HEK293 (cell line): ENCODE measurements at regions of chr5 and their contacts with region 1.

Region 1: GRCh38 chr5:171913987-171914273 is 92.5 kb downstream of the FBXW11 start:
- H3K4me3 ChIP-seq: no peak overlapping the region
- H3K27ac ChIP-seq: no peak overlapping the region
- H3K4me1 ChIP-seq: no peaks in the 10 kb centered on the region
- CTCF ChIP-seq: no peak

Region 2: GRCh38 chr5:171418316-171418981 is 495.5 kb before region 1 on chr5:
- CTCF ChIA-PET with region 1: interaction called, 37 read pairs
- POLR2A ChIA-PET with region 1: interaction called, 3 read pairs
- H3K4me3 ChIP-seq: peak overlapping the region; percentile 49
- H3K27ac ChIP-seq: no peak overlapping the region
- H3K4me1 ChIP-seq: peaks cover 2% of the 10 kb centered on the region; the same call in 1 of the 2 replicates
- CTCF ChIP-seq: peak; percentile 96

Region 3: DNA sequence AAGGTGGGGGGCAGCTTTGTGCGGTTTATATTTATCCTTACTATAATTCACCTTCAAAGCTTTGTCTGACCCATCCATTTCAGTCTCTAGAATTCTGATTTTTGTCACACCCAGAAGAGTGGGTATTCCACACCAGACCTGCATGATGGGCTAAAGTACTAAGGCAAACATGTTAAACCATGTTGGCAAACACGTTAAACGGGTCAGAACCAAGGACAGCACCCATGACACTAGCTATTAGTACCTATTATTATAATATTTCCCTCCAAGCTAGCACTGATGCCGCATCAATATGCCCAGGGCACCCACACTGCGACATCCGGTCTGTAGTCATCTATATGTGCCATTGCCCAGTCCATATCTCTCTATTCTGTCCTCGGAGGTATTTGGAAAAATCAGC is 12.2 kb before region 1 on chr5:
- CTCF ChIA-PET with region 1: interaction called, 19 read pairs
- POLR2A ChIA-PET with region 1: no interaction called
- H3K4me3 ChIP-seq: no peak overlapping the region
- H3K27ac ChIP-seq: no peak overlapping the region
- H3K4me1 ChIP-seq: no peaks in the 10 kb centered on the region
- CTCF ChIP-seq: no peak

Region 4: DNA sequence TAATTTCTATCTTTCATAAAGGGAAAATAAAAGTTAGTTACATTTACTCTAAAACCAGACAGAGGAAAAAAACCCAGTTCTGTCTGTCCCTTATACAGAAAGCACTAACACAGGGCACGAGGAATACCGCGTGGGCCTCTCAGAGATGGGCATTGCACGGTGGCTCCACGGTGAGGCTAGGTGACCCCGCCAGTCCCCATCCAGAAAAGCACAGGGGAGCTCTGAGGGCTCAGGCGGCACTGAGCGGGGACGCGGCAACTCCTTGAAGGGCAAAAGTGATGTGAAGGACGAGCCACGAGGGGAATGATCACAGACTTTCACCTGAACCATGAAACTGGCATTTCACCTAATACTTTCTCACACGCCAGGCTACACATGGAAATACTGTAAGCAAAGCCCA is 128.3 kb after region 1 on chr5:
- CTCF ChIA-PET with region 1: interaction called, 44 read pairs
- POLR2A ChIA-PET with region 1: interaction called, 3 read pairs
- H3K4me3 ChIP-seq: no peak overlapping the region
- H3K27ac ChIP-seq: no peak overlapping the region
- H3K4me1 ChIP-seq: no peaks in the 10 kb centered on the region; the same call in 1 of the 2 replicates
- CTCF ChIP-seq: no peak

Region 5: GRCh38 chr5:172188033-172188892 is 274.3 kb after region 1 on chr5 and contains the start of gene STK10:
- CTCF ChIA-PET with region 1: interaction called, 22 read pairs
- POLR2A ChIA-PET with region 1: interaction called, 3 read pairs
- H3K4me3 ChIP-seq: peak within 1 kb of the TSS; percentile 48
- H3K27ac ChIP-seq: peak within 1 kb of the TSS; percentile 59
- H3K4me1 ChIP-seq: peaks cover 4% of the 10 kb centered on the region; the same call in 1 of the 2 replicates
- CTCF ChIP-seq: peak; percentile 98

Region 6: GRCh38 chr5:172283862-172284610 is 370.1 kb after region 1 on chr5:
- CTCF ChIA-PET with region 1: no interaction called
- POLR2A ChIA-PET with region 1: no interaction called
- H3K4me3 ChIP-seq: peak overlapping the region; percentile 93
- H3K27ac ChIP-seq: peak overlapping the region; percentile 94
- H3K4me1 ChIP-seq: peaks cover 18% of the 10 kb centered on the region
- CTCF ChIP-seq: no peak